Testis (tissue), 5 donors: ENCODE measurements at regions of chr13 and their contacts with region 1.

Region 1: DNA sequence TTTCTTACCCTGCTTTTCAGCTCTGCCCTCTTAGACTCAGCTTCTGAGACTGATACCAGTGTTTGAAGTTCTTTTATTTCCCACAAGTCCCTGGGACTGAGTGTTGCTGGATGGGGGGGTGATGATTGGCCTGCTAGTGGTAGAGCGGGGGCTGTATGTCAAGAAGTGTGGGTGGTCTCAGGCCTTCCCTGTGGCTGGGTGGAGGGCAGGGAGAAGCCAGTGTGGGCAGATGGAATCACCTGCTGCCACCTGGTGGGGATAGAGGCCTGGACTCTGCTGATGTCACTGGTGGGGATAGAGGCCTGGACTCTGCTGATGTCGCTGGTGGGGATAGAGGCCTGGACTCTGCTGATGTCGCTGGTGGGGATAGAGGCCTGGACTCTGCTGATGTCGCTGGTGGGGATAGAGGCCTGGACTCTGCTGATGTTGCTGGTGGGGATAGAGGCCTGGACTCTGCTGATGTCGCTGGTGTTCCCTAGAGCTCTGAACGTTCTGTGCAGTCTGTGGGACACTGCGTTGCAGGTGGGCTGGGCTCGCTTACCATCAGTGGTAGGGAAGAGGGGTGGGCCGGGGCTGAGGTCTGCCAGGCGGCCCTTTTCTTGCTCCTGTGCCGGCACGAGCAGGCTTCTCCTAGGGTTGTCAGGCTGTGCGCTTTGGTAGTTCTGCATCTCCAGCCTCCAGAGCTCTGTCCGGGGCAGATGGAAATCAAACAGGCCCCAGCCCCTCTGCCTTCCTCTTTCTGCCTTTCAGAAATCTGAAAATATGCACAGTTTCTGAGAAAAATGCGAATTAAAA is 101.3 kb downstream of the ARHGEF7 start:
- DNase-seq: peak; percentile 70
- H3K4me3 ChIP-seq: no peak overlapping the region
- H3K27ac ChIP-seq: peak overlapping the region; percentile 22 to 83
- H3K4me1 ChIP-seq: peaks cover 38% of the 10 kb centered on the region
- H3K27me3 ChIP-seq: no peaks in the 10 kb centered on the region
- CTCF ChIP-seq: peak in 1 of 3 experiments; percentile 38
- POLR2A ChIP-seq: no peak

Region 2: GRCh38 chr13:111066544-111066943 is 149.8 kb before region 1 on chr13:
- intact Hi-C with region 1: loop called (anchors 10 kb)
- DNase-seq: peak; percentile 89
- H3K4me3 ChIP-seq: peak overlapping the region; percentile 58 to 77
- H3K27ac ChIP-seq: peak overlapping the region; percentile 90 to 92
- H3K4me1 ChIP-seq: peaks cover 8% of the 10 kb centered on the region
- H3K27me3 ChIP-seq: no peaks in the 10 kb centered on the region
- CTCF ChIP-seq: no peak
- POLR2A ChIP-seq: no peak

Region 3: DNA sequence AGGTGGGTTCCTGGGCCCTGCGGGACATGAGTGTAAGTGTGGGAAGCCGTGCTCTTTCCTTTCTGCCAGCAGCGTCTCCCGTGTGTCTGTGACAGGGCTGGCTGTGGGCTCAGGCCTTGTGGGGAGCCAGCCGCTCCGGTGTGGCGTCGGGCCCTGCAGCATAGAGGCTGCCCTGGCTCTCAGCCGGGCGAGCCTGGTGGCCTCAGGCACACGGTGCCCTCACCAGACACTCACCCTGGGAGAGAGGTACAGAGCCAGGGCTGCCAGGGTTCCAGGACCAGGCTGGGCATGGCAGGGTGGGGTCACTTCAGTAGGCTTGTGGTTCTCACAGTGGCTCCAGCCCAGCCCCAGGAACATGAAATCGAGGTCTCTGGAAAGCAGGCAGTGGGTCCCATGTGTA is 428.8 kb after region 1 on chr13:
- intact Hi-C with region 1: no loop called
- DNase-seq: no peak
- H3K4me3 ChIP-seq: no peak overlapping the region
- H3K27ac ChIP-seq: no peak overlapping the region
- H3K4me1 ChIP-seq: no peaks in the 10 kb centered on the region
- H3K27me3 ChIP-seq: no peaks in the 10 kb centered on the region
- CTCF ChIP-seq: no peak
- POLR2A ChIP-seq: no peak

Region 4: GRCh38 chr13:112657850-112658444 is 1441.6 kb after region 1 on chr13:
- intact Hi-C with region 1: no loop called
- DNase-seq: no peak
- H3K4me3 ChIP-seq: no peak overlapping the region
- H3K27ac ChIP-seq: no peak overlapping the region
- H3K4me1 ChIP-seq: no peaks in the 10 kb centered on the region
- H3K27me3 ChIP-seq: no peaks in the 10 kb centered on the region
- CTCF ChIP-seq: no peak
- POLR2A ChIP-seq: no peak